ENCODE measurements at regions of chr13 and their contacts with region 1.

Region 1: DNA sequence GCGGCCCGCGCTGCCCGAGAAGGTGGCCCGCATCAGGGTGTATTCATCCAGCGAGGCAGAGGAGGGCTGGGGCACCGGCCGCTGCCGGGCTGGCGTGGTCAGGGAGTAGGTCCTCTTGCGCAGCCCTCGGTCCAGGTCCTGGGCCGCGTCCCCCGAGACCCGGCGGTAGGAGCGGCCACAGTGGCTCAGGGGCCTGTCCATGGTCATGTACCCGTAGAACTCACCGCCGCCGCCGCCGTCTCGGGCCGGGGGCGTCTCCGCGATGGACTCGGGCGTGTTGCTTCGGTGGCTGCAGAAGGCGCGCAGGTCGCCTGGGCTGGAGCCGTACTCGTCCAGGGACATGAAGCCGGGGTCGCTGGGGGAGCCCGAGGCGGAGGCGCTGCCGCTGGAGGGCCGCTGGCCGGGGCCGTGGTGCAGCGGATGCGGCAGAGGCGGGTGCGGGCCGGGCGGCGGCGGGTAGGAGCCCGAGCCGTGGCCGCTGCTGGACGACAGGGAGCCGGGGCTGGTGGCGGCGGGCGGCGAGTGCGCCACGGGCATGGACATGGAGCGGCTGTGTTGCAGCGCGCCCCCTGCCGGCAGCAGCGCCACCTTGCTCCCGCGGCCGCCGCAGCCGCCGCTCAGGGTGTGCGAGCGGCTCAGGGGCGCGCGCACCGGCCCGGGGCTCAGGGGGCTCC is 2.0 kb downstream of the IRS2 start:
- DNase-seq: peak; percentile 70 to 97 (median 77)

Region 2: GRCh38 chr13:109145631-109146030 is 638.7 kb before region 1 on chr13:
- intact Hi-C with region 1: loop called (anchors 5 kb)
- DNase-seq: peak in 1 of 10 donors; percentile 30

Measured in posterior cingulate gyrus (tissue), 11 donors.